A549 (cell line): ENCODE measurements at regions of chr9 and their contacts with region 1.

Region 1: GRCh38 chr9:12640016-12640587 is 53.1 kb upstream of the TYRP1 start:
- DNase-seq: peak; percentile 4 to 68
- ATAC-seq: peak; percentile 85 to 86
- H3K4me3 ChIP-seq: no peak overlapping the region
- H3K27ac ChIP-seq: no peak overlapping the region
- H3K4me1 ChIP-seq: no peaks in the 10 kb centered on the region
- CTCF ChIP-seq: peak; percentile 60
- EP300 ChIP-seq: no peak
- POLR2A ChIP-seq: no peak
- RAD21 ChIP-seq: peak; percentile 74 to 77

Region 2: DNA sequence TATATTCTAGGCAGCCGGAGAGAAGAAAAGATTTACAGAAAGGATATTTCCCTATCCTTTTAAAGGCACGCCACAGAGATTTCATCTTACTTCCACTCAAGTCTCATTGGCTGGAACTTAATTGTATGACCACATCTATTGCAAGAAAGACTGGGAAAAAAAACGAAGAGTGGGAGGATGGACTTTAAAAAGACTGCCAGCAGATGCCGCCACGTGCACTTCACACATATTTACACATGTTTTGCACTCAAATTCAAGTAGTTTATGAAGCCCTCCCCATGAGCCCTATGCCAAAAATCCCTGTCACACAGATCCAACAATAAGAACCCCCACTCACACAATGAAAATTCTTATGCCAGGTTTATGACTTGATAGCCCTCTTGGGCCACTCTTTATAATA is 85.5 kb before region 1 on chr9:
- CTCF ChIA-PET with region 1: interaction called, 24 read pairs
- POLR2A ChIA-PET with region 1: no interaction called
- DNase-seq: peak in 1 of 2 experiments; percentile 17
- ATAC-seq: no peak
- H3K4me3 ChIP-seq: no peak overlapping the region
- H3K27ac ChIP-seq: no peak overlapping the region
- H3K4me1 ChIP-seq: no peaks in the 10 kb centered on the region
- CTCF ChIP-seq: peak; percentile 22; the same call in 1 of the 3 replicates
- EP300 ChIP-seq: no peak
- POLR2A ChIP-seq: no peak
- RAD21 ChIP-seq: 0 out of 5 replicates have a peak, but pooled peaks of 1 of the 2 experiments have one; percentile 12